ENCODE measurements at regions of chr12 and their contacts with region 1.

Region 1: DNA sequence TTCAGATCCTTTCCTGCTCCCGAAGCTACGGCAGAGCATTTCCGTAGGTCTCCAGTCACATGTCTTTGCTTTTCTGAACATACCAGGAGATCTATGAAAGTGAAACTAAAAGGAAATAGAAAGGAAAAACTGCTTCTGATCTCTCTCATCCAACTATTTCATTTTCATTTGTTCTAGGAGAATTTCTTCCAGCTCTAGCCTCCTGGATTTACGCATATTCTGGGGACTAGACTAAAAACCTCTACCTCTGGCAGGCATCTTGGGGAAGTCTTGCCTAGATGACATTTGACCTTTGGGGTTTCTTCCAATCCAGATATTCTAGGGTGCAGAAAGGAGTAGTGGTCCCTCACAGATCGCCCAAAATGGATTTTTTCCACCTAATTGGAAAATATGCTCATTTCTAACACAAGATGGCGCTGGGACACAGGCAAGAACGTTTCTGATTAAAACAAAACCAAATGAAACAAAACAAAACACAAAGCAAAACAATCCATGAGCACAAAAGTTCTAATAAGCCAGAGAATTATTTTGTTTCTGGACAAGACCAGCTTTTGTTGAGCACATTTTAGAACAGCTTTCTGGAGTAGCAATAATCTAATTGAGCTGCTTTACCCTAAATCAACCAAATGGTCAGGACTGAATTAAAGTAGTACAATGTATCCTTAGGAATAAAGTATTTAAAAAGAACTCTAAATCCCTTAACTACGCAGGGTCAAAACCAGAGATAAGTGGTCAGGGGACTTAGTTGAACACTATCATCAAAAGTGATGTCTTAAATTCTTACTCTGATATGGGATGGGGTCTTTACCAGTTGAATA is 12.3 kb upstream of the PARP11 start:
- DNase-seq: peak in 1 of 2 donors; percentile 35
- ATAC-seq: peak in 6 of 8 donors; percentile 37 to 62 (median 52)
- H3K4me3 ChIP-seq: peak overlapping the region in 9 of 10 donors; percentile 20 to 49 (median 37)
- H3K27ac ChIP-seq: peak overlapping the region in 9 of 10 donors; percentile 39 to 81 (median 63)
- H3K4me1 ChIP-seq: peaks cover 0 to 13% (median 0%) of the 10 kb centered on the region in 9 donors
- H3K27me3 ChIP-seq: peaks cover 0 to 12% (median 10%) of the 10 kb centered on the region in 7 donors
- CTCF ChIP-seq: peak; percentile 69 to 86 (median 78)

Region 2: GRCh38 chr12:3820122-3820521 is 65.4 kb before region 1 on chr12:
- intact Hi-C with region 1: no loop called
- DNase-seq: no peak
- ATAC-seq: peak in 3 of 8 donors; percentile 13 to 68 (median 26)
- H3K4me3 ChIP-seq: no peak overlapping the region
- H3K27ac ChIP-seq: no peak overlapping the region
- H3K4me1 ChIP-seq: peaks cover 0 to 9% (median 0%) of the 10 kb centered on the region in 9 donors
- H3K27me3 ChIP-seq: no peaks in the 10 kb centered on the region
- CTCF ChIP-seq: no peak

Region 3: DNA sequence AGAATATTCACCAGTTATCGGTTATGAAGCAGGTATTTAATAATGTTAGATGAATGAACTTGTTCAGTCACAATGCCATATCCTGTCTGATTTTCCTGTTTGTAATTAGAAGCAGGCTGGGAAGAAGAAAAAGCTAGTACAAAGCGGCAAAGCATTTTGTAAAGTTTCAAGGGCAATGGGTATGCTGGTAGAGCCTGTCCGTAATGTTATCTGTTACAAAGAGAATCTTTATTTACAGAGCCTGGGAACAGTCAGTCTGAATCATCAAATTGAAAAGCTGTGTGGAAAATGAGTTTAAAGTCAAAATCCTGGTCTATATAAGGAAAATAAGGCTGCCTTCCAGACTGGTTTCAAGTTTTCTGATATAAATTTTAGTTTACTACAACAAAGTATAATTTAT is 52.7 kb before region 1 on chr12:
- intact Hi-C with region 1: no loop called
- DNase-seq: no peak
- ATAC-seq: no peak
- H3K4me3 ChIP-seq: no peak overlapping the region
- H3K27ac ChIP-seq: no peak overlapping the region
- H3K4me1 ChIP-seq: peaks cover 0 to 13% (median 0%) of the 10 kb centered on the region in 9 donors
- H3K27me3 ChIP-seq: no peaks in the 10 kb centered on the region
- CTCF ChIP-seq: no peak

Region 4: DNA sequence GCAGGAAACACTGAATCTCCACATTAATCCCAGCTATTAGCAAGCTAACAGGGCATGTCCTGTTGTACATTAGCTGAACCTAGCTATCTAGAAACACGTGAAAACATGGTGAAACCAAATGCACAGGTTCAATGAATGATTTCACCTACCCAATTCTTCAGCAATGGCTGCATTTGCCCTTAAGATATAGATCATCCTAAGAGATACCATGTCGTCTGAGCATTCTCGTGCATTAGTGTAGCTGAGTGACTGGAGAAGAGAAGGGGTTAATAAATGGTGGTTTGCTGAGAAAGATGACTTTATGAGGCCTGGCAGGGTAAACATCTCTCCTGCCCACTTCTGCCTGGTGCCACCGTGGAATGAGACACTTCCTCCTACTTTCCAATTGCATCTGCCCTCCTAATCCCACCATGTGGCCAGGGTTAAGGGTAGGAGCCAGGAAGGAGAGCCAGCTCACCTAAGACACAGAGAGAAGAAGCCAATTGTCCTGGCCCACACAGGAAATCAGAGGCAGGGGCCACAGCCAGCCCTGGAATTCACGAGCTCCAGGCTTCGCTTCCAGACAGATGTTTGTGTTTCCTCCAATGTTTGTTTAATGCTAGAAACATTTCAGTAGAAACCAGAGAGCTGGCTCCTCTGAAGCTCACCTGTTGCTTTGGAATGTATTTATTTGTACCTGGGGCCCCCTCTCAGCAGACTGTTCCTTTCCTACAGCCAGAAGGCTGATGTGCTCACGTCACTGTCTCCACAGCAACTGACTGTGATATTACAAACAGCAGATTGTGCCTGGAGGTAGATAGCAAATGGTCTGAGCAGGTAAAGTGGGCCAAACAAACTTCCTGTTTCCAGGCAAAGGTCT is 113.7 kb after region 1 on chr12:
- intact Hi-C with region 1: loop called in 1 of 10 experiments (anchors 10 kb)
- DNase-seq: no peak
- ATAC-seq: no peak
- H3K4me3 ChIP-seq: no peak overlapping the region
- H3K27ac ChIP-seq: no peak overlapping the region
- H3K4me1 ChIP-seq: no peaks in the 10 kb centered on the region
- H3K27me3 ChIP-seq: peaks cover 0 to 20% (median 0%) of the 10 kb centered on the region in 7 donors
- CTCF ChIP-seq: no peak

Region 5: GRCh38 chr12:4037747-4038312 is 152.3 kb after region 1 on chr12:
- intact Hi-C with region 1: loop called (anchors 1 to 10 kb)
- DNase-seq: peak in 1 of 2 donors; percentile 56
- ATAC-seq: peak in 1 of 8 donors; percentile 52
- H3K4me3 ChIP-seq: no peak overlapping the region
- H3K27ac ChIP-seq: no peak overlapping the region
- H3K4me1 ChIP-seq: peaks cover 0 to 4% (median 0%) of the 10 kb centered on the region in 9 donors
- H3K27me3 ChIP-seq: peaks cover 0 to 6% (median 0%) of the 10 kb centered on the region in 7 donors
- CTCF ChIP-seq: peak; percentile 44 to 83 (median 71)

Region 6: GRCh38 chr12:4276524-4277204 is 391.2 kb after region 1 on chr12:
- intact Hi-C with region 1: loop called (anchors 1 to 10 kb)
- DNase-seq: peak; percentile 72 to 93
- ATAC-seq: peak; percentile 19 to 56 (median 44)
- H3K4me3 ChIP-seq: peak overlapping the region in 7 of 10 donors; percentile 63 to 95 (median 92)
- H3K27ac ChIP-seq: peak overlapping the region in 9 of 10 donors; percentile 81 to 98 (median 96)
- H3K4me1 ChIP-seq: peaks cover 17 to 84% (median 73%) of the 10 kb centered on the region in 9 donors
- H3K27me3 ChIP-seq: peaks cover 0 to 45% (median 0%) of the 10 kb centered on the region in 7 donors
- CTCF ChIP-seq: peak; percentile 73 to 92 (median 90)

Measured in heart right ventricle (tissue), 16 donors.